Vagina (tissue), 2 donors: ENCODE measurements at regions of chr3 and their contacts with region 1.

Region 1: GRCh38 chr3:42988566-42988965 is 9.5 kb downstream of the GASK1A start:
- DNase-seq: peak in 1 of 2 donors; percentile 29
- H3K4me3 ChIP-seq: no peak overlapping the region
- H3K27ac ChIP-seq: no peak overlapping the region
- H3K4me1 ChIP-seq: no peaks in the 10 kb centered on the region
- H3K27me3 ChIP-seq: no peaks in the 10 kb centered on the region
- CTCF ChIP-seq: no peak
- POLR2A ChIP-seq: no peak

Region 2: GRCh38 chr3:42667523-42668412 is 320.8 kb before region 1 on chr3:
- intact Hi-C with region 1: no loop called
- DNase-seq: peak in 1 of 2 donors; percentile 85
- H3K4me3 ChIP-seq: no peak overlapping the region
- H3K27ac ChIP-seq: peak overlapping the region; percentile 26
- H3K4me1 ChIP-seq: peaks cover 36% of the 10 kb centered on the region
- H3K27me3 ChIP-seq: no peaks in the 10 kb centered on the region
- CTCF ChIP-seq: no peak
- POLR2A ChIP-seq: no peak

Region 3: DNA sequence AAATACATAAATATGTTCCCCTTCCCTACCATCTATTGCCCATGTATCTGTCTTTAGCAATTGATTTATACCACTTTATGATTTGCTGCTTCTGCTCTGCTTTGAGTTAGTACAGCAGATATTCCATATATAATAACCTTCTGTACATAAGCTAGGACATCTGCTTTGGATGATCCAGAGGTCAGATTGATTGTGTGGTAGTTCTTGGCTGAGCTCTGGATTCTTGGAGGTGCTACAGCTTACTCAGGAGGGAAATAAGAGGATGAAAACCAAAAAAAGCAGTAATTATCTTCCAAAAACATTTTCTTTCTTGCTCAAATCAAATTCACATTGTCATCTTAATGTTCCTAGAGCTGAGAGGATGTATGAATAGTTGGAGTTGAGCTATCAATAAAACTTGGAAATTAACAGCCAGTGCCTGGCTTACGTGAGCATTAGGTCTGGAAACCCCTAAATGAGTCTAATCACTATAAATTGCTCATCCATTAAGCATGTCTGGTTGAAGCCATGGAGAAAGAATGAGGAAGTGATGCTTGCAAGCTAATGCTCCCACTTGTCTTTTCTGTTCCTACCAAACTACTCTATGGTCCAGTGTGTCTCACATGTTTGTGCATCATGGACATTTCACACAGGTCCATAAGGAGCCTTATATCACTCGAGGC is 1836.8 kb after region 1 on chr3:
- intact Hi-C with region 1: loop called (anchors 5 kb)
- DNase-seq: no peak
- H3K4me3 ChIP-seq: no peak overlapping the region
- H3K27ac ChIP-seq: no peak overlapping the region
- H3K4me1 ChIP-seq: no peaks in the 10 kb centered on the region
- H3K27me3 ChIP-seq: no peaks in the 10 kb centered on the region
- CTCF ChIP-seq: no peak
- POLR2A ChIP-seq: no peak